Activated CD4-positive, alpha-beta T cell treated with anti-CD3 and anti-CD28 coated beads, Interleukin-2, amount 10 ng/mL, durations not matched to agents 24 days and 14 days (primary cell): ENCODE measurements at regions of chr14 and their contacts with region 1.

Region 1: DNA sequence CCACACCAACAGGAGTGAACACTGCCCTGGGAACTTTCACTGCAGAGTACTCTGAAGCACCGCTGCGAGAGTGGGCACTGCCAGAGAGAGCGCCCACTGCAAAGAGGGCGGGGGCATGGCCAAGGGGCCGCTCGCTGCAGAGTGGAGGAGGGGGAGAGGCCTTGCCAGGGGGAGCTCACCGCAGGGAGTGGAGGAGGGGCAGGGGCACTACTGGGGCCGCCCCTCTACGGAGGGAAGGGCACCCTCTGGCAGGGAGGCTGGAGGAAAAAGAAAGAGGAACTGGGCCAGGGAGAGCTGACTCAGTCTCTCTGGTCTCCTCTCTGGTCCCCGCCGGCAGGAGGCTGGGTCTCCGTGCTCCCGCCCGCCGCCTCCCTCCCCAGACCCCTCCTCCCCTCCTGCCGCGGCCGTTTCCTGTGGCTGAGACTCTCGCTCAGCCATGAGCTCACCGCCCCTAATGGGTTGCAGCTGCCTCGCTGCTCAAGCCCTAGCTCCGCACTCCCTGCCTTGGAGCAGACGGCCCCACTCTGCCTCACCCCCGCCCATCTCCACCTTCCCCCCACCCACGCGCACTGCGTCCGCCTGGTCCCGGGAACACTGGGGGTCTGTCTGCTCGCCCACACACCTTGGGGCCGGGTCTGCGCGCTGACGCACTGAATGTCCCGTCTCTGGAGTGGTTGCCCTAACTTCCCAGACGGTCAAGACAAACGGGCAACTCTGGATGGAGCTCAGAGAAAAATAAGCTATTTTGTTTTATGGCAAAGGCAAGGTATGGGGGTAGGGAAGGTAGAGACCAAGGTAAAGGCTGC is 1.3 kb downstream of the ARHGEF40 start:
- DNase-seq: peak; percentile 80
- H3K4me3 Mint-ChIP-seq: peak overlapping the region; percentile 77
- H3K27ac Mint-ChIP-seq: no peak overlapping the region
- H3K4me1 Mint-ChIP-seq: peaks cover 33% of the 10 kb centered on the region
- H3K27me3 Mint-ChIP-seq: peaks cover 73% of the 10 kb centered on the region

Region 2: GRCh38 chr14:20934148-20934762 is 137.2 kb before region 1 on chr14:
- intact Hi-C with region 1: no loop called
- DNase-seq: peak; percentile 70
- H3K4me3 Mint-ChIP-seq: no peak overlapping the region
- H3K27ac Mint-ChIP-seq: no peak overlapping the region
- H3K4me1 Mint-ChIP-seq: no peaks in the 10 kb centered on the region
- H3K27me3 Mint-ChIP-seq: no peaks in the 10 kb centered on the region

Region 3: DNA sequence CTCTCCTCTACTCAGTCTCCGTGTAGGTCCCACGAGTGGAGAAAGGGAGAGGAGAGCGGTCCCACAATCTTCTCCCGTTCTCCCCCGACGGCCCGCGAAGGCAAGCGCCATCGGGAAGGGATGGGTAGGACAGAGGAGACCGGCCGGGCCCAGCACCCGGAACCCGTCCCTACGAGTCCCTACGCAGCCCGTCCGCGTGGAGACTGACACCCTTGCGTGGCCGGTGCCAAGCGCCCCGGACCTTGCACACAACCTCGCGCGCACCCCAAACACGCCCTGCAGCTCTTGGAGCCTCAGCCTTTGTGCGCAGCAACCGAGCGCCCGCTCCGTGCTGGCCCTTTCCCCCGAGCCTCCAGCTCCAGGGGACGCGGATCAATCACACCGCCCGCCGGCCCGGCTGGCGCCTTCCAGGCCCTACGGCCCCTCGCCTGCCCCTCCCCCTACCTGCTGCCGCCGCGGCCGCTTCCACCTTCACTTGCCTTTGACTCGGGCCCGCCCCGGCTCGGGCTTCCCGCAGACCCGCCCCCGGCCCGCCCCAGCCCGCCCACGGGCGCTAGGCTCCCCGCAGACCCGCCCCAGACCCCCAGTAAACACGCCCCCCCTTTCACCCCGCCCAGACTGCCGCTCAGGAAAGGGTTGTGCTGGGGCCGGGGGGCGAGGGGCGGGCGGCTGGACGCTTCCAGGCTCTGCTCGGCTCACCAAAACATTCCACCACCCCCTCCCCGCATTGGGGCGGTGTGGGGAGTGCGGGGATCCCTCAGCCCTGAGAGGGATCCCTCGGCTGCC is 46.6 kb before region 1 on chr14 and contains the start of gene NDRG2:
- intact Hi-C with region 1: loop called (anchors 5 kb)
- DNase-seq: peak; percentile 90
- H3K4me3 Mint-ChIP-seq: peak within 1 kb of the TSS; percentile 82
- H3K27ac Mint-ChIP-seq: no peak within 1 kb of the TSS
- H3K4me1 Mint-ChIP-seq: peaks cover 15% of the 10 kb centered on the region
- H3K27me3 Mint-ChIP-seq: peaks cover 44% of the 10 kb centered on the region
- total RNA-seq, gene NDRG2: 1.9 and 2.3 TPM in 2 replicates

Region 4: DNA sequence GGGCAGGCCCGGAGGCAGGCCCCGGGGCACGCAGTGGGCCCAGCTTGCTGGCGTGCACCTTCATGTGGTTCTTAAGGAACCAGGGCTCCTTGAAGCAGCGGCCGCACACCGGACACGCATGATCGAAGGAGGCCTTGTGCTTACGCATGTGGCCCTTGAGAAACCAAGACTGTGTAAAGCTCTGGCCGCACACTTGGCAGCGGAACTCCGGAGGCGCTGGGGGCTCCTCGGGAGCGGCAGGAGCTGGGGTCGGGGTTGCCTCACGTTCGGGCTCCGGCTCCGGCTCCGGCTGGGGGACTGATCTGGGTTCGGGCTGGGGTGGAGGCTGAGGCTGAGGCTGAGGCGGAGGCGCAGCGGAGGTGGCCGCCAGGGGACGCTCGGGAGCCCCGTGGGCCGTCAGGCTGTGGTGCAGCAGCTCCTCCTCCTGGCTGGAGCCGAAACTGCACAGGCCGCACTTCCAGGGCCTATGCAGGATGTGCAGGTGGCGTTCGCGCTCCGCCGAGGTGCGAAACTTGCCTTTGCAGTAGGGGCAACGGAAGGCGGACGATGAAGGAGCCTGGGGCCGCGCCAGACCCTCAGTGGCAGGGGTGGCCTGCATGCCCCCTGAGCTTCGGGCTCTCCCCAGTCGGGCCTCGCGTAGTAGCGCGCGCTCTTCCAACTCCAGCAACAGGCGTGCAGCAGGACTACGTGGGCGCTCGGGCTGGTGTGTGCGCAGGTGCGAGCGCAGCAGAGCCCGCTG is 21.0 kb after region 1 on chr14:
- intact Hi-C with region 1: loop called (anchors 1 kb)
- DNase-seq: peak; percentile 98
- H3K4me3 Mint-ChIP-seq: no peak overlapping the region
- H3K27ac Mint-ChIP-seq: no peak overlapping the region
- H3K4me1 Mint-ChIP-seq: peaks cover 19% of the 10 kb centered on the region
- H3K27me3 Mint-ChIP-seq: peaks cover 10% of the 10 kb centered on the region